Prostate gland (tissue), 2 donors: ENCODE measurements at regions of chr1 and their contacts with region 1.

Region 1: DNA sequence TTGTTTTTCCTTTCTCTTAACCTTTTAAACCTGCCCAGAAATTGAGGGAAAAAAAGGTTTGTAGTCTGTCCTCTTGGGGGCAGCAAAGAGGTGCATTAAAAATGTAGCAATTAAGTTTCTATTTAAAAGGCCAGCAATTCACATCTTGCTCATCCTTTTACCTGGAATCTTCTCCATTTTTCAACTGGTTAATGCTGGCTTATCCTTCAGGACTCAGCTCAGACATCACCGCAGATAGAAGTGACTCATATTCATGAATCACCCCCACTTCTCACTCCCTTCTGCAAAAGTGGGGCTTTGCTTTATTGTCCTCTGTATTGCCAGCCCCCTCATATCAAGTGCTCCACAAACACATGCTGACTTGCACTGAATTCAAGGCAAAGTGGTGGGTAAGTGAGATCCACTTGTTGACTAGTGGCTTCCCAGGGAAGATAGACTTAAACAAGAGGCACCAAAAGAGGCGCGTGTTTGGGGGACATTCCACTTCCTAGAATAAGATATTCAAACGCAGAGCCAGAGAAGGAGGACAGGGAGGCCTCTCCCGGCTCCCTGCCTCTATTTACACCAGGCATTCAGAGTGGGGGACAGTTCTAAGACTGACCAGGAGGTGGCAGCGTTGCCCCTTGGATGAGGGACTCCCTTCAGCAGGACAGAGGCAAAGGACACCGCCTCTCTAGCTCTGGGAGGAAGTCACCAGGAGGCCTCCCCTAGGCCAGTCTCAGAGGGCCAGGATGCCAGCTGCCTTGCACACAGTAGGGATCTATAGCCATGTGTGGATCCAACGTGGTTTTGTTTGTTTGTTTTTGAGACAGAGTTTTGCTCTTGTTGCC is 23.2 kb upstream of the ZNF648 start:
- DNase-seq: peak; percentile 85
- H3K4me3 ChIP-seq: no peak overlapping the region
- H3K27ac ChIP-seq: peak overlapping the region in 1 of 2 donors; percentile 53
- H3K4me1 ChIP-seq: no peaks in the 10 kb centered on the region
- H3K27me3 ChIP-seq: no peaks in the 10 kb centered on the region
- CTCF ChIP-seq: peak; percentile 73 to 96 (median 88)
- POLR2A ChIP-seq: no peak

Region 2: DNA sequence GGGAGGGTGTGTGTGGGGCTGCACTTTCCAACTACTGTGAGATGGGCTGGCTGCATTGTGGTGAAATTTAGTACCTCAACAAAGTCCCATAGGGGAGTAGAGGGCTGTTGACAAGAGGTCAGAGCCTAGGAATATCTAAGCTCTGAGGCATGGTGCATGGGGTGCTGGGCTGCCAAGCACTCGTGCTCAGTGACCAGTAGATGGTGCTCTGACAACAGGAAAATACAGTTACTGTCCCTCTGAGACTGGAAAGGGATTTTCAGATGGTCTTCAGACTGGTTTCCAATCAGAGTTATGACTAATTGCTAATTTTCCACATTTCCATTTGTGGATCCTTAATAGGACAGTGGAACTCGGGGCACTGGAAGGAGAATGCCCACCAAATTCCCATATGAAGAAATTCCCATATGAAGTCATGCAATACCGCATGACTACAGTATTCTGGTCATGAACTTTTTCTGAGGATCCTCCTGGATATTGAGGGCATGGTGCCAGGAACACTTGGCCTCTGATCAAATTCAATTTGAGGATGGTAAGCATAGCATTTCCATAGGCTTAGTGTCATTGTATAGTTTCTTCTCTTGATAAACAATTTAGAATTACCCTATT is 605.5 kb before region 1 on chr1:
- intact Hi-C with region 1: loop called (anchors 5 kb)
- DNase-seq: peak; percentile 31
- H3K4me3 ChIP-seq: no peak overlapping the region
- H3K27ac ChIP-seq: no peak overlapping the region
- H3K4me1 ChIP-seq: no peaks in the 10 kb centered on the region
- H3K27me3 ChIP-seq: peaks cover 12% of the 10 kb centered on the region
- CTCF ChIP-seq: peak in 3 of 4 experiments; percentile 63 to 69 (median 68)
- POLR2A ChIP-seq: no peak

Region 3: DNA sequence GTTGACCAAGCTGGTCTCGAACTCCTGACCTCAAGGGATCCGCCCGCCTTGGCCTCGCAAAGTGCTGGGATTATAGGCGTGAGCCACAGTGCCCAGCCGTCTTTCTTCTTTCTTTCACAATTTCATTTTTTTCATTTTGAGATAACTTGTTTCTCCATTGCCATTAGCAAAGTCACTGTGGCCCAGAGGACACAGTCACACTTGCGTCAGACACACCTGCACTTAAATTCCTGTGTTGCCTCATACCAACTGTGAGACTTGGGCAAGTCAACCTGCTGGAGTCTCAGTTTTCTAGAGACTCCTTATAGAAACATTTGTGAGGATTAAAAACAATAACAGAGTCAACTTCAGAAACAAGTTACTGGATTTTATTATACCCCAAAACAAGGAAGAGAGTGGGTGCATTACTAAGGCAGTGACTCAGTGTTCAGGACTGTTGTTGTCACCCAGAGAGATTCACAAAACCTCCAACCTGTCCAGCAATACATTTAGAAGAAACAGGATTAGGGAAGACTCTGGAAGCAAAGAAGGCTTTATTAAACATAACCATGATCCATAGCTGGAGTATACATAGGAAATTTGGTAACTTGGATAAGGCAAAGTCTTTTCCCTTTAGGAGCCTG is 313.2 kb after region 1 on chr1:
- intact Hi-C with region 1: loop called (anchors 2 kb)
- DNase-seq: no peak
- H3K4me3 ChIP-seq: no peak overlapping the region
- H3K27ac ChIP-seq: no peak overlapping the region
- H3K4me1 ChIP-seq: no peaks in the 10 kb centered on the region
- H3K27me3 ChIP-seq: no peaks in the 10 kb centered on the region
- CTCF ChIP-seq: no peak
- POLR2A ChIP-seq: no peak

Region 4: GRCh38 chr1:182568647-182569284 is 484.1 kb after region 1 on chr1:
- intact Hi-C with region 1: no loop called
- DNase-seq: no peak
- H3K4me3 ChIP-seq: no peak overlapping the region
- H3K27ac ChIP-seq: no peak overlapping the region
- H3K4me1 ChIP-seq: no peaks in the 10 kb centered on the region
- H3K27me3 ChIP-seq: no peaks in the 10 kb centered on the region
- CTCF ChIP-seq: no peak
- POLR2A ChIP-seq: no peak

Region 5: DNA sequence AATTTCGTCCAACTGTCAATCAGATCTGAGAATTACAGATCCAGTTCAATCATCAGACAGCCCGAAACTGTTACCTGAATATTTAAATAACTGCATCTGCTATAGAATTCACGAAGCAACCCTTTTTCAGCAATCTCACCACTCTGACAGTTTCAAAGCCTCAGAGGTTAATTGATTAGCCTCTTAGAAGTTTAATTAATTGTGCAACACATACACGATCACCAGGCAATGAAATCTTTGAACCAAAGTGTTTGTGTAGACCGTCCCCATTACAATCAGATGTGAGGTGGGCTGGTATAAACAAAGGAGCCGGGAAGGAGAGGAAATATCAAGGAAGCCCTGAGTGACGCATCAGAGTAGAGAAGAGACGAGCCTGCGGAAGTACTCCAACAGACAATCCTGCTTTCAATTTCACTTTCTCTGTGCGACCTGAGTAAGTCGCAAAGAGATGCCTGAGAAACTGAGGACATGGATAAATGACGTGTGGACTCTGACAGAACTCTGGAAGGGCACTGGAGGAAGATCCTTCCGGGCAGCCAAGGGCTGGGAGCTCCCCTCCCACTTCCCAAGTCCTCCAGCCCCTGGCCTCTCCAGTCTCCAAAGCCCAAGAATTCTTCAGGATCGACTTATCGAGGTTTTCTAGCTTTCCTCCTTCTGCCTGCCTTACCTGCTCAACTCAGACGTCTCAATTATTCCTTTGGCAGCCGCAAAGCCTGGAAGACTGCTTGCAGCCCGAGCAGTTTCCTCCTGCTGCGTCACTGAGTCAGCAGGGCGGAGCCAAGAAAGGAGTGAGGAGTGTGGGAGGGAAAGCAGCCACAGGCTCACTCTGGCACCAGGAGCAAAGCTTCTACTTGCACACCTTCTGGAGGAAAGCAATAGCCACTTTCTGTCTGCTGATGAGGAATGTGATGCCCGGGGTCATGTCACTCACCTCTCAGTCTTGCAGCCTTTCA is 504.1 kb after region 1 on chr1 and contains the start of gene RNASEL:
- intact Hi-C with region 1: loop called (anchors 5 kb)
- DNase-seq: peak; percentile 76
- H3K4me3 ChIP-seq: peak within 1 kb of the TSS; percentile 60 to 69
- H3K27ac ChIP-seq: peak within 1 kb of the TSS; percentile 95 to 98
- H3K4me1 ChIP-seq: no peaks in the 10 kb centered on the region
- H3K27me3 ChIP-seq: no peaks in the 10 kb centered on the region
- CTCF ChIP-seq: peak in 1 of 4 experiments; percentile 13
- POLR2A ChIP-seq: peak; percentile 50
- total RNA-seq, gene RNASEL: 7.6 to 10.7 TPM

Region 6: GRCh38 chr1:182789138-182790076 is 704.7 kb after region 1 on chr1 and contains the start of gene NPL:
- intact Hi-C with region 1: loop called (anchors 5 kb)
- DNase-seq: peak; percentile 77
- H3K4me3 ChIP-seq: peak within 1 kb of the TSS; percentile 50
- H3K27ac ChIP-seq: peak within 1 kb of the TSS; percentile 10 to 63
- H3K4me1 ChIP-seq: no peaks in the 10 kb centered on the region
- H3K27me3 ChIP-seq: no peaks in the 10 kb centered on the region
- CTCF ChIP-seq: peak in 1 of 4 experiments; percentile 18
- POLR2A ChIP-seq: peak; percentile 89
- total RNA-seq, gene NPL: 2.2 to 6.8 TPM